Astrocyte of the cerebellum (primary cell): ENCODE measurements at regions of chr4 and their contacts with region 1.

Region 1: DNA sequence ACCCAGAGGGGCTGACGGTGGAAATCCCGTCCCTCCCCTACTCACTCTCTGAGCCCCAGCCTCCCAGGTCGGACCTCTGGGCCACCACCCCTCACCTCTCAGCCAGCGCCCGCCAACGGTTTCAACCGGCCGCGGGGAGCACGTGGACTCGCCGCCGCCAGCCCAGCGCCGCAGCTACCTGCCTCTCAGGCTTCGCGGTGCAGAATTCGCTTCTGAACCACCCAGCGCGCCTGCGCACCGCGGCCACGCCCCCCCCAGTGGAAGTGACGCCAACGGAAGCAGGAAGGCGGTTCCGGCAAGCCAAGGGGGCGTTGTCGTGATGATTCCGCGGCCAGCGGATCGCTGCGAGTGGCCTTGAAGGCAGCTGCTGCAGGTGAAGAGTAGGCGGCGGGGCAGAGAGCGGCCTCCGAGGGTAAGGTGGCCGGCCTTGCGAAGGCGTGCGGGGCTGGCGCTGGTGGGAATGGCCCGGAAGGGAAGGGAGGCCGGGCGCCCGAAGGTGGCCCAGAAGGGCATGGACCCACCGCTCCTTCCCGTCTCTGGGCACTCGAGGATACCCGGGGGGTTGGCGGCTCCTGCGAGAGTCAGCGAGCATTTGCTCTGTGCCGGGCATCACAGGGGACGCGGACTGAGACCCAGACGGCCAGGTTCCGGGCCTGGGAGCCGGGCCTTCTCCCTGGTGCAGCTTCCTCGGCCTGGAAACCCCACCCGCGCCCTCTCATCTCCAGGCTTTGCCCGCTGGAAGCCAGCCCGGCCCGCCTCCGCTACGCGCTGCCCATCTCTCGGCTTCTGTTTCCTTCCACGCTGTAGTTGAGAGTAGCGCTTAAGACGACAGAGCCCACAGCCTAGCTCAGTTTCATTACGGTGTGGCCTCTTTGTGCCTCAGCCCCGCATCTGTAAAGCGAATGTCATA is at the starts of genes LYAR and ZBTB49:
- DNase-seq: peak; percentile 79
- H3K4me3 ChIP-seq: peak within 1 kb of the TSS; percentile 94
- CTCF ChIP-seq: no peak

Region 2: DNA sequence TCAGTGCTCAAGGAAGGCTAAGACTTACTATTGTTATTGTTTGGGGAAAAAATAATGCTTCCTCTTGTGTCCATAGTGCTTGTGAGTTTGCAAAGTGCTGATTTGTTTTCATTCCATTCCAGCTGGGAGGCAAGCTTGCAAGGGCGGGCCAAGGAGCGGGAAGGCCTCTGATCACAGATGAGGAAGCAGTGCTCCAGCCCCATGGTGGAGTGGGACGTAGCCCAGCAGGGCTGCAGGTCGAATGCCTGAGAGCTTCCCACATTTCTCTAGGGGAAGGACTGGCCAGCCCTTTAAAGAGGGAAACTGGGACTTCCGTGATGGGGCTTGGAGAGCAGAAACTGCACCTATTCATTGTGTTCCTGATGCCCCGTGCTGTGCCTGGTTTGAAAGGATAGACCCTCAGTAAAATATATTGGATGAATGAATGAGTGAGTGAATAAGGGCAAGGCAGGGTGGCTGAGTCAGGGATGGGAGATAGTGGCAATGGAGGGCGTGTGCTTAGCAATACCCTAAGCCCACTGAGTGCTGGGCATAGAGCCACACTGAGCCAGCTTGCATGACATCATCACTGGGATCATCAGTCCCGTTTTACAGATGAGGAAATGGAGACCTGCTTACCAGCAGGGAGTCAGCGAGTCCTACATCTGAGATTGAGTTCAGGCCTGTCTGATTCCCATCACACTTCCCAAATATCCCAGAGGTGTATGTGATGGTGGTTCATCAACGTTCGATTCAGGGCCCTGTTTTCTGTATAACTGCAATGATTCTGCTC is 78.8 kb after region 1 on chr4:
- in situ Hi-C with region 1: loop called (anchors 5 kb)
- DNase-seq: no peak
- H3K4me3 ChIP-seq: no peak overlapping the region
- CTCF ChIP-seq: no peak